CD4-positive, alpha-beta memory T cell (primary cell): ENCODE measurements at regions of chr1 and their contacts with region 1.

Region 1: GRCh38 chr1:168234846-168235547 is 9.2 kb downstream of the SFT2D2 start:
- DNase-seq: peak; percentile 29 to 59 (median 39)
- H3K4me3 ChIP-seq: no peak overlapping the region
- H3K4me3 Mint-ChIP-seq: no peak overlapping the region
- H3K27ac ChIP-seq: no peak overlapping the region
- H3K27ac Mint-ChIP-seq: peak overlapping the region in 4 of 7 donors; percentile 15 to 51 (median 30)
- H3K4me1 ChIP-seq: peaks cover 22% of the 10 kb centered on the region
- H3K4me1 Mint-ChIP-seq: peaks cover 40 to 66% (median 53%) of the 10 kb centered on the region in 4 donors
- H3K27me3 ChIP-seq: no peaks in the 10 kb centered on the region
- H3K27me3 Mint-ChIP-seq: no peaks in the 10 kb centered on the region

Region 2: GRCh38 chr1:168218658-168219057 is 16.3 kb before region 1 on chr1:
- CTCF ChIA-PET with region 1: interaction called, 48 read pairs
- POLR2A ChIA-PET with region 1: no interaction called
- intact Hi-C with region 1: no loop called
- DNase-seq: no peak
- H3K4me3 ChIP-seq: no peak overlapping the region
- H3K4me3 Mint-ChIP-seq: no peak overlapping the region
- H3K27ac ChIP-seq: no peak overlapping the region
- H3K27ac Mint-ChIP-seq: no peak overlapping the region
- H3K4me1 ChIP-seq: no peaks in the 10 kb centered on the region
- H3K4me1 Mint-ChIP-seq: no peaks in the 10 kb centered on the region
- H3K27me3 ChIP-seq: no peaks in the 10 kb centered on the region
- H3K27me3 Mint-ChIP-seq: peaks cover 2 to 6% of the 10 kb centered on the region in 2 donors

Region 3: DNA sequence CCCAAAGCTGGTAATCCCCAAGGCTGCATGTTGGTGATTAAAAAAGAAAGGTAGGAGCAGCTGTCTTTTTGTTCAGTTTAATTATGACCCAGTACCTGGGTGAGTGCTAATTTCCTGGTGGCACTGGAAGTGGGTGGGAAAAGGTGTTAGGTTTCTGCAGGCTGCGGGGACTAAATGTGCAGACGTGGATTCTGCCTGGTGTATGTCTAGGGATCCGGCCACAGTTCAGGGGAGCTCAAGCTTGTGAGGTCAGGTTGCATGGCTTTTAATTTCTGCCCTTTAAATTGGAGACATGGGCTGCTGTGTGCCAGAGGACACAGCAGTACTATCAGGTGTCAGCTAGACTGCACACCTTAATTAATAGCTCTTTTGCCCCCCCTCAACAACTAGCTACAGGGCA is 25.4 kb after region 1 on chr1:
- CTCF ChIA-PET with region 1: interaction called, 10 read pairs
- POLR2A ChIA-PET with region 1: no interaction called
- intact Hi-C with region 1: no loop called
- DNase-seq: no peak
- H3K4me3 ChIP-seq: no peak overlapping the region
- H3K4me3 Mint-ChIP-seq: no peak overlapping the region
- H3K27ac ChIP-seq: no peak overlapping the region
- H3K27ac Mint-ChIP-seq: peak overlapping the region in 1 of 7 donors; percentile 9
- H3K4me1 ChIP-seq: no peaks in the 10 kb centered on the region
- H3K4me1 Mint-ChIP-seq: peaks cover 16 to 28% (median 20%) of the 10 kb centered on the region in 4 donors
- H3K27me3 ChIP-seq: no peaks in the 10 kb centered on the region
- H3K27me3 Mint-ChIP-seq: no peaks in the 10 kb centered on the region

Region 4: DNA sequence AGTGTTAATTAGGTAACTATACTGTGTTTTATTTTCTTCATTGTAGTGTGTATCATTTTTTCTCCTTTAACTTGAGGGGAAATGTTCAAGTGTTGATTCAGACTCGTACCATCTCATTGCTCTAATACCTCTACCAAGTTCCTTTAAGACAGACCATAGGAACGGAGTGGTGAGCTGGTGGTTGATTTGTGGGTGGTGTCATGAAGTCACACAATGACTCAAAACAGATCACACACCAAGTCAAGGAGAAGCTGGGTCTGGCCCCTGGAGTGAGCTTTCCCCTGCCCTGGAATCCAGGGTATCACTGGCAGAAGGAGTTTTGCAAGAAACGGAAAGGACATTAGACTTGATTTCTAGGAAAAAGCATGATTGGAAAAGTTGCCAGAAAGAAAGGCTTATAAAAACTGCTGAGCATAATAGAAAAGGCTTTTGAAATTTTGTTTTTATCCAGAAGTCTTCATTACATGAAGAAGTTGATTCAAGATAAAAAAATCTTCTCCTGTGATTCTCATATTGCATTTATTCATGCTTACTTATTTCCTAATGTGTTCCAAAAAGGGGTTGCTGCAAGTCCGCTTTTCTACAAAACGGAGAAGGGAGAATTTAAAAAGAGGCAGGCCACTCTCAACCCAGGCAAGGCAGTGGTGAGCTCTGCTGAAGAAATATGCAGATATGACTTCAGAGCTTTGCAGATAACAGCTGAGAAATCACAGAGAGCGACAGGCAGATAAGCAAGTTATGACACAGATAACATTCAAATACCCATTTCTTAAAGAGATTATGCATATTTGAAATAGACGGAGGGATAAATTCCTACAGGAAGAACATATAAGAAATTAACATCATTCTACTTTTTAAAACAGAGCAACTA is 125.4 kb after region 1 on chr1:
- CTCF ChIA-PET with region 1: interaction called, 15 read pairs
- POLR2A ChIA-PET with region 1: interaction called, 5 read pairs
- intact Hi-C with region 1: loop called (anchors 5 kb)
- DNase-seq: peak in 1 of 5 donors; percentile 55
- H3K4me3 ChIP-seq: no peak overlapping the region
- H3K4me3 Mint-ChIP-seq: peak overlapping the region in 3 of 8 donors; percentile 25 to 48 (median 36)
- H3K27ac ChIP-seq: no peak overlapping the region
- H3K27ac Mint-ChIP-seq: peak overlapping the region in 5 of 7 donors; percentile 79 to 100 (median 90)
- H3K4me1 ChIP-seq: peaks cover 49% of the 10 kb centered on the region
- H3K4me1 Mint-ChIP-seq: peaks cover 27 to 55% (median 44%) of the 10 kb centered on the region in 4 donors
- H3K27me3 ChIP-seq: no peaks in the 10 kb centered on the region
- H3K27me3 Mint-ChIP-seq: no peaks in the 10 kb centered on the region

Region 5: DNA sequence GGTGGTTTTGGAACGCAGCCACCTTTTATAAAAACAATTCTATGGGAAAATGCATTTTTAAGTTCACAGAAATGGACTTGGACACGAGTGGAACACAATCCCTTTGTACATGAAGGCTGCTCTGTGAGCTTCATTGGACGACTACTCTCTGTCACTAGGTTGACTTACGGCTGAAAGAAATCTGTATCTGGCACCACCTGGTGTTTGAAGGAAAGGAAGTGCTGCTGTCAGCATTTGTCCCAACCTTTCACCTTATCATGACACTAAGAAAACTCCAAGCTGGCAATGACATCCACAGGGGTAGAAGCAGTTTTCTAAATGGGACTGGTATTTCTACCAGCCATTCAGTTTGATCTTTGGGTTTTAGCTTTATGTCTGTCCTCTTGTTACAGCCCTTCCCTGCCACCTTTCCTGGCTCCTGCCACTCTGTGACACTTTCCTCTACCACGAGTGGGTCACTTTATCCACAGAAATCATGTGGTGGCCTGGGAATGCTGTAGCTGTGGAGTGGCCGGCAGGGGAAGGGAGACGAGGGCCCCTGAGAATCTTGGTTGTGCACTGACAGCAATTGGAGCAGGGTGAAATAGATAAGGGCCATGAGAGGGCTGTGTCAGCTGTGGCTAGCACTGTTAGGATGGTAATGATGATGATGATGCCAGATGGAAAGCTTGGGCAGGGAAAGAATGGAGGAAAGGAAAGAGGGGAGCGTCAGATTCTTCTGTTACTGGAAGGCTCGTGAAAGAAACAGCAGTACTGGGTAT is 130.9 kb after region 1 on chr1:
- CTCF ChIA-PET with region 1: interaction called, 15 read pairs
- POLR2A ChIA-PET with region 1: interaction called, 5 read pairs
- intact Hi-C with region 1: loop called (anchors 5 kb)
- DNase-seq: peak in 4 of 5 donors; percentile 39 to 46 (median 42)
- H3K4me3 ChIP-seq: no peak overlapping the region
- H3K4me3 Mint-ChIP-seq: no peak overlapping the region
- H3K27ac ChIP-seq: no peak overlapping the region
- H3K27ac Mint-ChIP-seq: peak overlapping the region in 5 of 7 donors; percentile 1 to 69 (median 32)
- H3K4me1 ChIP-seq: peaks cover 47% of the 10 kb centered on the region
- H3K4me1 Mint-ChIP-seq: peaks cover 33 to 48% (median 40%) of the 10 kb centered on the region in 4 donors
- H3K27me3 ChIP-seq: no peaks in the 10 kb centered on the region
- H3K27me3 Mint-ChIP-seq: no peaks in the 10 kb centered on the region

Region 6: GRCh38 chr1:169348383-169349036 is 1113.5 kb after region 1 on chr1:
- CTCF ChIA-PET with region 1: interaction called, 18 read pairs
- POLR2A ChIA-PET with region 1: no interaction called
- intact Hi-C with region 1: loop called (anchors 1 kb)
- DNase-seq: peak in 4 of 5 donors; percentile 44 to 52 (median 47)
- H3K4me3 ChIP-seq: no peak overlapping the region
- H3K4me3 Mint-ChIP-seq: no peak overlapping the region
- H3K27ac ChIP-seq: no peak overlapping the region
- H3K27ac Mint-ChIP-seq: no peak overlapping the region
- H3K4me1 ChIP-seq: no peaks in the 10 kb centered on the region
- H3K4me1 Mint-ChIP-seq: peaks cover 0 to 3% (median under 1%) of the 10 kb centered on the region in 4 donors
- H3K27me3 ChIP-seq: no peaks in the 10 kb centered on the region
- H3K27me3 Mint-ChIP-seq: peaks cover 0 to 1% of the 10 kb centered on the region in 2 donors